ENCODE measurements at regions of chr20 and their contacts with region 1.

Region 1: DNA sequence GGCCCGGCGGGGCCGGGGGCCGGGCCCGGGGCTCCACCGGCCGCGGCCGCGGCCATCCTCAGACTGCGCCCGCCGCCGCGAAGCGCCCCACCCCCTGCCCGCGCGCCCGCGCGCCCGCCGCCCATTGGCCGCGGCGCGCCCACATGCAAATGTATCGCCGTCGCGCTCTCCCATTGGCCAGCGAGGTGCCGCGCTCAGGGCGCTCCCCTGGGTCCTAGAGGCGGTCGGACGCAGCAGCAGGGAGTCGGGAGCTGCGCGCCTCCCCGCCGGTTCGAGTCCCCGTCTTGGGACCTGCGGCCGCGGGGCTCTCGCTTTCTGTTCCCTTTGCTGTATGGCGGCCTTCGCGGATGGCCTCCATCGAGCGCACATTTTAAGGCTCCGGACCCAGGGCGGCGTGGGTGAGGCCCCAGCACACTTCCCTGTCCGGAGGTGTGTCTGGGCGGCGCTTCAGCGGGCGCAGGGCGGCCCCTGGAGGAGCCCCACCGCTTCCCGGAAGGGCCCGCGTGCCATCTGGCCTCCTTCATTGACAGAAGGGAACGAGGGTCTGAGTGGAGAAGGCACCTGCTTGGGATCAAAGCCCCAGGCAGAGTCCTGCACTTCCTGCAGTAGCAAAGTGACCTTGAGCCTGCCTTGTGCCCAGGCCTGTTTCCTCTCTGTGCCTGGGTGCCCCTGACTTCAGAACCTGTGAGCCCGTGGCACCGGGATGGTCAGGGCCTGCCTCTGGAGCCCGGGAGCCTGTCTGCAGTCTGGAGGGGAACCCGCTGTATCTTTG is at the start of gene CABLES2:
- DNase-seq: peak; percentile 98
- total RNA-seq, gene CABLES2: 3.4 to 3.8 TPM

Region 2: DNA sequence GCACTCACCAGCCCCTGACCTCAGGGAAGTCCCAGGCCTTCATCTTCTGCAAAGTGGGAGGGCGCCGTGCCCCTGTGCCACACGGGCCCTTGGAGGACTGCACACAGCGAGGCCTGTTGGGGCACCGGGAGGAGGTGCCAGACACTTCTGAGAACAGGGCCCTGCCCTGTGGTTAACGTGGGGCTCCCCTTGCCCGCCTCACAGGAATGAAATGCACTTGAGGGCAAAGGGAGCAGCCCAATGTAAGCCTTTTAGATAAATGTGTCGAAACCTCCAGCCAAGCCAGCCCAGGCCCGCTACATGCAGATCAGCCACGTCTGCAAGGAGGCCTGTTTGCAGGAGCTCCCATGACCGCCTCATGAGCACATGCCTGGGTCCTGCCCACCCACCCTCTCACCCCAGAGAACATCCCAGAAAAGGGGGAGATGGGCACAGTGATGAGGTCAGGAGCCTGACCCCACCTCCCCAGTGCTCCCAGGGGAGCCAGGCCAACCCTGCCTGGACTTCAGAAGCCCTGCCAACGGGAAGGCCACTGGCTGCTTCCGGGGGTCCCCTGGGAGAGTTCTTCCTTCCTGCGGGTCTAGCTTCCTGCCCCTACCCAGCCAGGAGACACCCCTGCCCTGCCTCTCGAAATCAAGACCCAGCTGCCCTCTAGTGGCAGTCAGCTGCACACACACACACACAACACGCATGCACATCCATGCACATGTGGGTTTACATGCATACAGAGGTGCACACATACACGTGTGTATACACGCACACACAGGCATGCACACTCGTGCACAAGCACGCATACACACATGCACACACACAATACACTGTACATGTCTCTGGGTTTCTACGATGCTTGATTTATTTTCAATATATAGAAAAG is 520.4 kb before region 1 on chr20:
- intact Hi-C with region 1: no loop called
- DNase-seq: no peak

Region 3: GRCh38 chr20:62616728-62617621 is 209.6 kb after region 1 on chr20:
- intact Hi-C with region 1: loop called in 1 of 2 experiments (anchors 10 kb)
- DNase-seq: peak; percentile 92

Region 4: GRCh38 chr20:62768481-62769287 is 361.3 kb after region 1 on chr20:
- intact Hi-C with region 1: no loop called
- DNase-seq: peak; percentile 76

Region 5: DNA sequence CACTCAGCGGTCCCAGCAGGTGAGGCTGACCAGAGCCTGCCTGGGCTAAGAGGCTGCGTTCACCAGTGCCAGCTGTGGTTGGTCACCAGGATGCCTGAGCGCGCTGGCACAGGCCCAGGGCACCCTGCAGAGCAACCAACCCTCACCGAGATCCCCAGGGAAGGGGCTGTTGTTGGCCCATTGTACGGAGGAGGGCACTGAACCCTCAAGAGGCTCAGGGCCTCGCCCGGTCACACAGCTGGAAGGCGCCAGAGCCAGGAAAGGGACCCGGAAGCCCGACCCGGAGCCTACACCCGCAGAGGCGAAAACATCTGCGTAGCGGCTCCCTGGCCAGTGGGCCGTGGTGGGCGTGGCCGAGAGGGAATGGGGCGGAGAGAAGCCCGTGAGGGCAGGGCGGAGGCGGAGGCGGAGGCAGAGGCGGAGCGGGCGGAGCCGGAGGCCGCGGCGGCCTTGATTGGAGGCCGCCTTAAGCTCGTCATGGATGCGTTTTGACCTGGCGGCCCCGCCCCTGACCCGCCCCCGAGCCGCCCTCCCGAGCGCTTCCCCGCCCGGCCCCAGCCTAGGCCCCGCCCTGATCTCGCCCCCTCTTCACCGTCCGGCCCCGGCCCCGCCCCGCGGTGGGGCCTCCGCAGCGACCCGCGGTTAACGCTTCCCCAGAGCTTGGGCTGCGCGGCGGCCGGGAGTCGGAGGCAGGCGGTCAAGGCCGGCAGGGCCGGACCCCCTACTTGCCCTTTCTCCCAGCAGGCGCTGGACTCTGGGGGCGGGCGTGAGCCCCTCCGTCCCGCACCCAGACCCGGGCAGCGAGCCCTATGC is 386.7 kb after region 1 on chr20:
- intact Hi-C with region 1: loop called in 1 of 2 experiments (anchors 10 kb)
- DNase-seq: peak; percentile 99

Region 6: GRCh38 chr20:64044484-64045247 is 1637.3 kb after region 1 on chr20:
- intact Hi-C with region 1: loop called in 1 of 2 experiments (anchors 5 kb)
- DNase-seq: no peak

Measured in posterior vena cava (tissue), 2 donors.